ENCODE measurements at regions of chr2 and their contacts with region 1.

Region 1: GRCh38 chr2:11344342-11344955 is at the start of gene ROCK2:
- DNase-seq: peak; percentile 90
- ATAC-seq: peak; percentile 80 to 91 (median 84)
- H3K4me3 ChIP-seq: peak within 1 kb of the TSS; percentile 71 to 98 (median 94)
- H3K27ac ChIP-seq: peak within 1 kb of the TSS; percentile 95 to 100 (median 99)
- H3K4me1 ChIP-seq: peaks cover 0 to 56% (median 37%) of the 10 kb centered on the region in 9 donors
- H3K27me3 ChIP-seq: no peaks in the 10 kb centered on the region
- CTCF ChIP-seq: no peak
- total RNA-seq, gene ROCK2: 29.7 to 51.8 (median 38.5) TPM

Region 2: GRCh38 chr2:11154923-11155380 is 189.5 kb before region 1 on chr2:
- intact Hi-C with region 1: loop called in 1 of 10 experiments (anchors 5 kb)
- DNase-seq: peak; percentile 99
- ATAC-seq: peak; percentile 93 to 97 (median 95)
- H3K4me3 ChIP-seq: peak overlapping the region; percentile 41 to 99 (median 84)
- H3K27ac ChIP-seq: peak overlapping the region; percentile 64 to 98 (median 94)
- H3K4me1 ChIP-seq: peaks cover 0 to 27% (median 19%) of the 10 kb centered on the region in 9 donors
- H3K27me3 ChIP-seq: no peaks in the 10 kb centered on the region
- CTCF ChIP-seq: no peak

Region 3: DNA sequence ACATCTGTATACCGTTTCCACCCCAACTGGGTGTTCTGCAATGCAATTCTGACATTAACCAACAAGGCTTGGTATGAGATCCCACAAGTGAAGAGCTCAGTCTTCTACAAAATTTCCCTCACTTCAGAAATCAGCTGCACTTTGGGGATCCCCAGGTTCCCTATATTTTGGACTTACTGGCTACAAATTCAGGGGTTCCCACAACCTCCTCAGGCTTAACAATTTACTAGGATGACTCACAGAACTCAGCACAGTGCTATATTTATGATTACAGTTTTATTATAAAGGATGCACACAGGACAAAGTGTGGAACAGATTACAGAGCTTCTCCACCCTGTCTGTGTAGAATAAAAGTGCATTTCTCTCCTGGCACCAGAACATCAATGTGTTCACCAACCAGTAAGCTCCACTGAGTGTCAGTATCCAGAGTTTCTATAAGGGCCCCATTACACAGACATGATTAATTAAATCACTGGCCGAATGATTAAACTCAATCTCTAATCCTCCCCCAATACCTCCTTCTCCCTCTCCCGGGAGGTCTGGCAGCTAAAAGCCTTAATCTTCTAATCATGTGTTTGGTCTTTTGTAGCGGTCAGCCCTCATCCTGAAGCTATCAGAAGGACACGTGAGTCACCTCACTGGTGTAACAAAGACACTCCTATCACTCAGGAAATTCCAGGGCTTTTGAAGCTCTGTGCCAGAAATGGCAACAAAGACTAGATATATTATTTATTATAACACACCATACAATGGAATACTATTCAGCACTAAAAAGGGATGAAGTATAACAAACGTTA is 104.6 kb before region 1 on chr2:
- intact Hi-C with region 1: loop called in 7 of 10 experiments (anchors 5 to 10 kb)
- DNase-seq: no peak
- ATAC-seq: peak in 4 of 8 donors; percentile 43 to 67 (median 56)
- H3K4me3 ChIP-seq: no peak overlapping the region
- H3K27ac ChIP-seq: peak overlapping the region in 1 of 10 donors; percentile 0
- H3K4me1 ChIP-seq: peaks cover 0 to 23% (median 13%) of the 10 kb centered on the region in 9 donors
- H3K27me3 ChIP-seq: no peaks in the 10 kb centered on the region
- CTCF ChIP-seq: no peak

Region 4: GRCh38 chr2:11257078-11257477 is 87.4 kb before region 1 on chr2:
- intact Hi-C with region 1: no loop called
- DNase-seq: no peak
- ATAC-seq: no peak
- H3K4me3 ChIP-seq: no peak overlapping the region
- H3K27ac ChIP-seq: no peak overlapping the region
- H3K4me1 ChIP-seq: peaks cover 0 to 20% (median 6%) of the 10 kb centered on the region in 9 donors
- H3K27me3 ChIP-seq: no peaks in the 10 kb centered on the region
- CTCF ChIP-seq: no peak

Region 5: DNA sequence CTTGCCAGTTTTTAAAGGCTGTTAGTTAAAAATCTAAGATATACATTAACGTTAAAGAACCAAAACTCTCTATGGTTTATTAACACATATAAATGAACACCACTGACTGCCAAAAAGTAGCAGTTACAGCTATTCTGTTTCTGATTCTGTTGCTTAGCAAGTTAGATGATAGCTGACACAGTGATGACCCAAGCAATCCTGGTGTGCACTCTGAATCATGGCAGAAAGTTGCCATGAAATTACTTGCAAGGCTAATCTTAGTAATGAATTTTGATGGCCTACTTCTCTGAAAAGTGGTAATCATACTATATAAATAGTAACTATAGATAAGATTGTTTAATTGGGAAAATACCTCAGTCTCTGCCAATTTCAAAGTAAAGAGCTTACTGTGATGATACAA is 57.7 kb before region 1 on chr2:
- intact Hi-C with region 1: loop called in 3 of 10 experiments (anchors 5 to 10 kb)
- DNase-seq: peak in 1 of 2 donors; percentile 19
- ATAC-seq: peak in 7 of 8 donors; percentile 40 to 93 (median 82)
- H3K4me3 ChIP-seq: no peak overlapping the region
- H3K27ac ChIP-seq: peak overlapping the region in 6 of 10 donors; percentile 33 to 66 (median 52)
- H3K4me1 ChIP-seq: peaks cover 0 to 47% (median 27%) of the 10 kb centered on the region in 9 donors
- H3K27me3 ChIP-seq: no peaks in the 10 kb centered on the region
- CTCF ChIP-seq: no peak

Region 6: DNA sequence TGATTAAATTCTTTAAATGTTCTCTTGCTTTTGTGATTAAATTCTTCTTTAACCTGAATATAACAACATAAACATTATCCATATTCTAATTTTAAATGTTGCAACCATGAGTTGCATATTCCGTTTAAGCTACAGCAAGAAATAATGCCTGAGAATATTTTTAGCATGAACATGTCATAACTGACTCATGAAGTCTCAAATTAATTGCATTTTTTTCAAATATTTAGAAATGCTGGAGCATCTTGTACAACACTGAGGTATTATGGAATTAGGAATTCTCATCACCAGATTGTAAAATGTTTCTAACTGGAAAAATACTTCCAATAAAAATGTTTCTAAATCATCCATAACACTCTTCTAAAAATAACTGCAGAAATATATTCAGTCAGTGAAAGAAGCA is 14.7 kb before region 1 on chr2:
- intact Hi-C with region 1: no loop called
- DNase-seq: no peak
- ATAC-seq: peak in 1 of 8 donors; percentile 36
- H3K4me3 ChIP-seq: no peak overlapping the region
- H3K27ac ChIP-seq: peak overlapping the region in 3 of 10 donors; percentile 22 to 61 (median 45)
- H3K4me1 ChIP-seq: peaks cover 5 to 75% (median 34%) of the 10 kb centered on the region in 9 donors
- H3K27me3 ChIP-seq: no peaks in the 10 kb centered on the region
- CTCF ChIP-seq: no peak

Region 7: DNA sequence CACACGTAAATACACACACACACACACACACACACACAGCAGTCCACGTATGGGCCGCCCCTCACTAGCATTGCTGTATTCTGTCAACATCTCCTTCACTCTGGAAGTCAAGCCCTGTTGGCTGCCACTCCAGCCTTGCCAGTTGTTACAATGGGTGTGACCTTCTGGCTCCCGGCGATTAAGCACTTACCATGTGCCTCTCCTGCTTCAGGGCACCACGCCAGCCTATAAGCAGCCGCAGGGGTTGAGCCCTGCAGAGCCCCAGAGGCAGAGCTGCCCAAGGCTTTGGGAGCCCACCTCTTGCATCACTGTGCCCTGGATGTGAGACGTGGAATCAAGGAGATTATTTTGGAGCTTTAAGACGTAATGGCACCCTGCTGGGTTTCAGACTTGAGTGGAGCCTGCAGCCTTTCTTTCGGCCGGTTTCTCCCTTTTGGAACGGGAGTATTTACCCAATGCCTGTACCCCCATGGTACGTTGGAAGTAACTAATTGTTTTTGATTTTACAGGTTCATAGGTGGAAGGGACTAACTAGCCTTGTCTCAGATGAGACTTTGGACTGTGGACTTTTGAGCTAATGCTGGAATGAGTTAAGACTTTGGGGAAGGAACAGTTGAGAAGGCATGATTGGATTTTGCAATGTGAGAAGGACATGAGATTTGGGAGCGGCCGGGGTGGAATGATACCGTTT is 54.4 kb after region 1 on chr2:
- intact Hi-C with region 1: loop called in 2 of 10 experiments (anchors 5 kb)
- DNase-seq: peak; percentile 45 to 64
- ATAC-seq: peak in 6 of 8 donors; percentile 20 to 78 (median 52)
- H3K4me3 ChIP-seq: no peak overlapping the region
- H3K27ac ChIP-seq: no peak overlapping the region
- H3K4me1 ChIP-seq: peaks cover 0 to 48% (median 22%) of the 10 kb centered on the region in 9 donors
- H3K27me3 ChIP-seq: no peaks in the 10 kb centered on the region
- CTCF ChIP-seq: no peak

Region 8: GRCh38 chr2:11411768-11412448 is 67.5 kb after region 1 on chr2:
- intact Hi-C with region 1: loop called in 8 of 10 experiments (anchors 2 to 10 kb)
- DNase-seq: peak in 1 of 2 donors; percentile 80
- ATAC-seq: peak; percentile 38 to 85 (median 73)
- H3K4me3 ChIP-seq: peak overlapping the region in 9 of 10 donors; percentile 26 to 56 (median 46)
- H3K27ac ChIP-seq: peak overlapping the region in 4 of 10 donors; percentile 2 to 53 (median 26)
- H3K4me1 ChIP-seq: peaks cover 0 to 19% (median 10%) of the 10 kb centered on the region in 9 donors
- H3K27me3 ChIP-seq: no peaks in the 10 kb centered on the region
- CTCF ChIP-seq: peak; percentile 73 to 95 (median 86)

Measured in heart right ventricle (tissue), 16 donors.